ENCODE measurements at regions of chr1 and their contacts with region 1.

Region 1: DNA sequence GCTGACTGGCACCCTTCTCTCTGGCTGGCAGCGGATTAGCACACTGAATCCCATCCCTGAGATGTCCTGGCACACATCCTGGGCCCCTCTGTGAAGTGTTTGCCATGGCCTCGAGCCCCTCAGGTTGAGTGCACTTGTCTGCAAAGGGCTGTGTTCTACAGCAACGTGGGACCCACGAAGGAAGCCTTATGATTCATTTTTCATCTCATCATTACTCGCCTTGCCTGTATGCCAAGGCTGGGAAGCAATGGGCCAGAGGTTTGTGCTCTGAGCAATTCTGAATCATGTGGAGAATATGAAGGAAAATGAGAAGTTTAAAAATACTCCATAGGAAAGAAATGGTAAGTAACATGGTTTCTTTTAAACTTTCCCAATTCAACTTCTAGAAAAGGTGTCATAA is 124.8 kb upstream of the LMO4 start:
- DNase-seq: peak in 1 of 2 experiments; percentile 79
- H3K4me3 ChIP-seq: no peak overlapping the region
- H3K27ac ChIP-seq: peak overlapping the region; percentile 70
- H3K4me1 ChIP-seq: peaks cover 50% of the 10 kb centered on the region
- H3K27me3 ChIP-seq: no peaks in the 10 kb centered on the region
- CTCF ChIP-seq: no peak

Region 2: DNA sequence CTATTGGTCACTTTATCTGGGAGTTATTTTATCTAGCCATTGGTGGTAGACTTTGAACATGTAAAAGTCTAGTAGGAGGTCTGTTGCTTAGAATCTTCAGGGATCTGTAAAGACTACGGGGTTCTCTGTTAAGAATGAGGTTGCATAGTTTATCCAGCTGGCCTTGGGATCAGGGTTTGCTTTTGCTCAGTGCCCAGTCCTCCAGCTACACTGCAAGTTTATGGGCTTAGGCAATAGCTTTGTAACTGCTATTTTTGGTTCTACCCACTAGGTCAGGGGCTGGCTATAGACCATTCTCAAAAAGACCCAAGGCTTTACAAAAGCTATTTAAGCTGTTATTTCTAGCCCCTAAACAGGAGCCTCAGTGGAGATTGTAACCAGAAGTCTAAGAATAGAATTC is 489.7 kb before region 1 on chr1:
- CTCF ChIA-PET with region 1: no interaction called
- POLR2A ChIA-PET with region 1: no interaction called
- intact Hi-C with region 1: no loop called
- DNase-seq: no peak
- H3K4me3 ChIP-seq: no peak overlapping the region
- H3K27ac ChIP-seq: no peak overlapping the region
- H3K4me1 ChIP-seq: no peaks in the 10 kb centered on the region
- H3K27me3 ChIP-seq: no peaks in the 10 kb centered on the region
- CTCF ChIP-seq: no peak

Region 3: GRCh38 chr1:87140851-87141555 is 62.9 kb before region 1 on chr1:
- CTCF ChIA-PET with region 1: no interaction called
- POLR2A ChIA-PET with region 1: no interaction called
- intact Hi-C with region 1: loop called (anchors 2 kb)
- DNase-seq: peak; percentile 75 to 97
- H3K4me3 ChIP-seq: no peak overlapping the region
- H3K27ac ChIP-seq: peak overlapping the region; percentile 67
- H3K4me1 ChIP-seq: peaks cover 26% of the 10 kb centered on the region
- H3K27me3 ChIP-seq: no peaks in the 10 kb centered on the region
- CTCF ChIP-seq: no peak

Region 4: DNA sequence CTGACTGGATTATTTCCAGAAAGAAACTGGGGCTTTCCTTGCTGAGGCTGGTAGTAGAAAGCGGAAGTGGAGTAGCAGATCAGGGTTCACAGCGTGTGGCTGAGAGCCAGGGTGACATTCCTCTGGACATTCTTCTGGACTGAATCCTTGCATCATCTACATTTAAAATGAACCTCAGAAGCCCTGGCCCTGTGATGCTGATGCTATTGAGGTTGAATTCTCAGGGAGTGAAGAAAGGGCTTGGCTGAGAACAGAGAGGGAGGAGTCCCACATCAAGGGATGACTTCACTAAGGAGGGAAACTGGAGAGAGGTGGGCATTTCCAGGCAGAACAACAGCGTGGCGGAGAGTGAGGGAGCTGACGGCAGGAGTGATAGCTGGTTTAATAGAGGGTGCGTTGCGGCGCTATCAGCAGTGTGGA is 22.4 kb after region 1 on chr1:
- CTCF ChIA-PET with region 1: no interaction called
- POLR2A ChIA-PET with region 1: no interaction called
- intact Hi-C with region 1: loop called (anchors 1 kb)
- DNase-seq: peak; percentile 84 to 98
- H3K4me3 ChIP-seq: 0 out of 2 replicates have a peak overlapping the region, but pooled peaks have one; percentile 10
- H3K27ac ChIP-seq: peak overlapping the region; percentile 90
- H3K4me1 ChIP-seq: peaks cover 43% of the 10 kb centered on the region
- H3K27me3 ChIP-seq: no peaks in the 10 kb centered on the region
- CTCF ChIP-seq: no peak

Region 5: DNA sequence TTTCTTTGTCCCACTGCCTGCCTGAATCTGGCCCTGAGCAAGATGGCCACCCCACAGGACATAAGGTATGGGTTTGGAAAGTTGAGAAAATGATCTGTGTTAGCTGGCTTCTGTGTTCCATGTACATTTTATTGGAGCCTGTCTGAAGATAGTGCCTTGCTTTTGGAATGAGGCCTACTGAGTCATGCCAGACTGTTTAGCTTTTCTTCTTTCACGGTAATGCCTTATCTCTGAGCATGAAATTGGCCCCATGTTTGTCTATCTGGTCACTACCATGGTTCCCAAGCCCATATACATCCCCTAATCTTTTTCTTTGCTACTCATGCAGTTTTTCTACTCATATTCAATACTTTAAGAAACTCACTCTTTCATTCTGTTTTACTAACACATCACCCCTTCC is 39.7 kb after region 1 on chr1:
- CTCF ChIA-PET with region 1: no interaction called
- POLR2A ChIA-PET with region 1: interaction called, 6 read pairs
- intact Hi-C with region 1: loop called (anchors 2 kb)
- DNase-seq: no peak
- H3K4me3 ChIP-seq: no peak overlapping the region
- H3K27ac ChIP-seq: no peak overlapping the region
- H3K4me1 ChIP-seq: peaks cover 16% of the 10 kb centered on the region
- H3K27me3 ChIP-seq: no peaks in the 10 kb centered on the region
- CTCF ChIP-seq: no peak

Region 6: GRCh38 chr1:87266284-87266683 is 62.4 kb after region 1 on chr1:
- CTCF ChIA-PET with region 1: no interaction called
- POLR2A ChIA-PET with region 1: no interaction called
- intact Hi-C with region 1: no loop called
- DNase-seq: no peak
- H3K4me3 ChIP-seq: no peak overlapping the region
- H3K27ac ChIP-seq: no peak overlapping the region
- H3K4me1 ChIP-seq: no peaks in the 10 kb centered on the region
- H3K27me3 ChIP-seq: no peaks in the 10 kb centered on the region
- CTCF ChIP-seq: no peak

Region 7: DNA sequence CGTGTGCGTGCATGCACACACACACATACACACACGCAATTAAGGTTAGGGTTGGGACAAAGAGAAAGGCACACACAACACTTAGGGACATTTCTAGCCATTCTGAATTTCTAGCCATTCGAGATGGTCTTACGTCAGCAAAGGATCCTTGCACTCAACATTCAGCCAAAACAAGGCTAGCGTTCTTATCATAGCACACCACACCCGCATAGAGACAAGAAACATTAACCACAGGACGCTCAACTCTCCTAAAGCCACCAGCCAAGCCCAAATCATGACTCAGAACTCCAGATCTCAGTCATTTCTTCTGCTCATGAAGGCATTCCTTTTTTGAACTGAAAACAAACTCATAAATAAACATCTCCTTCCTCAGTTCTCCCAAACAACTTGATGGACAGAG is 231.6 kb after region 1 on chr1:
- CTCF ChIA-PET with region 1: no interaction called
- POLR2A ChIA-PET with region 1: no interaction called
- intact Hi-C with region 1: no loop called
- DNase-seq: peak in 1 of 2 experiments; percentile 21
- H3K4me3 ChIP-seq: no peak overlapping the region
- H3K27ac ChIP-seq: no peak overlapping the region
- H3K4me1 ChIP-seq: peaks cover 23% of the 10 kb centered on the region; the same call in 1 of the 2 replicates
- H3K27me3 ChIP-seq: no peaks in the 10 kb centered on the region
- CTCF ChIP-seq: no peak

Region 8: DNA sequence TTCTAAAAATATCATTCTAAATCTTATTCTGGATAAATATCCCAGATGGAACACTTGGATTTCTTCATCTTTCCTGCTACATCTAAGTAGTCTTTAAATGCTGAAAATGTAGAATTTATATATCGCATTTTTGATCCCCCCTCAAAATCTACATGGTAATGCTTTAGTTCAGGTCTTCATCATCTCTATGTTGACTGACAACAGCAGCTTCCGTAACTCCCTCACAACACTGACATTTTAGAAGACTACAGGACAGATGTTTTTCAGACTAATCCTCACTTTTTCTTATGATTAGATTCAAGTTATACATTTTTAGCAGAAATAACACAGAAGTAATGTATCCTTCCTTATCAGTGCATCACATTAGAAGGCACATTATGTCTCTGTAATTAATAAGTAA is 461.2 kb after region 1 on chr1:
- CTCF ChIA-PET with region 1: no interaction called
- POLR2A ChIA-PET with region 1: no interaction called
- intact Hi-C with region 1: no loop called
- DNase-seq: no peak
- H3K4me3 ChIP-seq: no peak overlapping the region
- H3K27ac ChIP-seq: no peak overlapping the region
- H3K4me1 ChIP-seq: no peaks in the 10 kb centered on the region
- H3K27me3 ChIP-seq: no peaks in the 10 kb centered on the region
- CTCF ChIP-seq: no peak